RWPE1 (cell line): ENCODE measurements at regions of chr13 and their contacts with region 1.

Region 1: DNA sequence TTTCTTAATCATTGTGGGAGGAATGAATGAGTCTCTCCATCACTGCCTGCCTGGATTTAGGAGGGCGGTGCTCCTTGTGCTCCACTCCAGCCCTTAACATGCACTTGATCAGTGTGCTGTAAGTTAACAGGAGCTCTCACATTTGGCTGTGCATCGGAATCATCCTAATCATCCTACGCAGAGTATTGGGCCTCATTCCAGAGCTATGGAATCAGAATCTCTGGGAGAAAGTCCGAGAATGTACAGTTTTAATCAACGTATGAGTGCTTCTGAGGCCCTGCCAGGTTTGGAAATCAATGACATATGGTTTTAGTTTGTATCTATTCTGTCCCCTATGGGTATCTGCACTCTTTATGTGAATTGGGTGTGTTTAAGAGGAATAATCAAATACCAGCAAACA is 34.9 kb upstream of the DCLK1 start:
- DNase-seq: no peak
- H3K27ac ChIP-seq: no peak overlapping the region
- CTCF ChIP-seq: no peak

Region 2: GRCh38 chr13:36143738-36144137 is 22.3 kb before region 1 on chr13:
- CTCF ChIA-PET with region 1: no interaction called
- POLR2A ChIA-PET with region 1: interaction called, 12 read pairs
- DNase-seq: no peak
- H3K27ac ChIP-seq: no peak overlapping the region
- CTCF ChIP-seq: no peak